ENCODE measurements at regions of chr1 and their contacts with region 1.

Region 1: GRCh38 chr1:230797942-230798418 is 50.8 kb downstream of the CAPN9 start:
- DNase-seq: peak; percentile 73
- H3K4me3 Mint-ChIP-seq: no peak overlapping the region
- H3K27ac Mint-ChIP-seq: no peak overlapping the region
- H3K4me1 Mint-ChIP-seq: no peaks in the 10 kb centered on the region
- H3K27me3 Mint-ChIP-seq: no peaks in the 10 kb centered on the region
- CTCF ChIP-seq: peak; percentile 81

Region 2: DNA sequence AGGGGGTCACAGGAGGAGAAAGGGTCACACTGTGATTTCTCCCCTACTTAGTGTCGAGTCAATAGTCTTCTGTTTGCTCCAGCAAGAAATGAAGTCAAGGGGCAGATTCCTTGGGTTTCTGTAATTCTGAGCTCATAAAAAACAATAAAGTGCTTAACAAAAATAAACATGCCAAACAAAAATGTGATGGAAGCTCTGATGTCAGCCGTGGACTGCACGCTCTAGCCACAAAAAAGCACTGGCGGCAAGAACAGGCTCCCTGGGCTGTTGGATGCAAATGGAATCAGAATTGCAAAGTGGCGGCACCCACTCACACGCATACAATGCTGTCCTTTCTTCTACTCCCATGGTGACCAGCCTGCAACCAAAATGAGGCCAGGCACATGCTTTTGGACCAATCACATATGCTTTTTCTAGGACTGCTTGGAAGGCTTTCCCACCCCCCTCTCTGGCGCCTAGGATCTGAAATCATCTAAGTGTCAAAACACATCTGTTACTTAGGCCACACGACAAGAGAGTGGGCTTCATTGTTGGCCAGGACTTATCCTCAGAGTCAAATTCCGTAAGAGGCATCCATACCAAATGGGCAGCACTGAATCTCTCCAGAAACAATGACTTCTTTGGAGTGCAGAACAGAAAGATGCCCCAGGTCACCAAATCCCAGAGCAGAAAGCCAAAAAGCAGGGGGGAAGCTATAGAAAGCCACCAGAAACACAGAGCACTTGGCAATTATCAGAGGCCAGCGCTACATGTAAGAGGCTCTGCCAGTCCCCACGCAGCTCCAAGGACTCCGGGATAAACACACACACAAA is 61.1 kb after region 1 on chr1:
- CTCF ChIA-PET with region 1: no interaction called
- intact Hi-C with region 1: loop called (anchors 2 kb)
- DNase-seq: peak; percentile 16
- H3K4me3 Mint-ChIP-seq: peak overlapping the region; percentile 44
- H3K27ac Mint-ChIP-seq: peak overlapping the region; percentile 95
- H3K4me1 Mint-ChIP-seq: peaks cover 96% of the 10 kb centered on the region
- H3K27me3 Mint-ChIP-seq: no peaks in the 10 kb centered on the region
- CTCF ChIP-seq: no peak

Region 3: GRCh38 chr1:230867903-230868735 is 70.1 kb after region 1 on chr1 and contains the start of gene C1orf198:
- CTCF ChIA-PET with region 1: interaction called, 4 read pairs
- intact Hi-C with region 1: loop called (anchors 2 kb)
- DNase-seq: peak; percentile 88
- H3K4me3 Mint-ChIP-seq: peak within 1 kb of the TSS; percentile 86
- H3K27ac Mint-ChIP-seq: peak within 1 kb of the TSS; percentile 97
- H3K4me1 Mint-ChIP-seq: peaks cover 50% of the 10 kb centered on the region
- H3K27me3 Mint-ChIP-seq: no peaks in the 10 kb centered on the region
- CTCF ChIP-seq: no peak
- total RNA-seq, gene C1orf198: 77.2 and 80.4 TPM in 2 replicates

Region 4: DNA sequence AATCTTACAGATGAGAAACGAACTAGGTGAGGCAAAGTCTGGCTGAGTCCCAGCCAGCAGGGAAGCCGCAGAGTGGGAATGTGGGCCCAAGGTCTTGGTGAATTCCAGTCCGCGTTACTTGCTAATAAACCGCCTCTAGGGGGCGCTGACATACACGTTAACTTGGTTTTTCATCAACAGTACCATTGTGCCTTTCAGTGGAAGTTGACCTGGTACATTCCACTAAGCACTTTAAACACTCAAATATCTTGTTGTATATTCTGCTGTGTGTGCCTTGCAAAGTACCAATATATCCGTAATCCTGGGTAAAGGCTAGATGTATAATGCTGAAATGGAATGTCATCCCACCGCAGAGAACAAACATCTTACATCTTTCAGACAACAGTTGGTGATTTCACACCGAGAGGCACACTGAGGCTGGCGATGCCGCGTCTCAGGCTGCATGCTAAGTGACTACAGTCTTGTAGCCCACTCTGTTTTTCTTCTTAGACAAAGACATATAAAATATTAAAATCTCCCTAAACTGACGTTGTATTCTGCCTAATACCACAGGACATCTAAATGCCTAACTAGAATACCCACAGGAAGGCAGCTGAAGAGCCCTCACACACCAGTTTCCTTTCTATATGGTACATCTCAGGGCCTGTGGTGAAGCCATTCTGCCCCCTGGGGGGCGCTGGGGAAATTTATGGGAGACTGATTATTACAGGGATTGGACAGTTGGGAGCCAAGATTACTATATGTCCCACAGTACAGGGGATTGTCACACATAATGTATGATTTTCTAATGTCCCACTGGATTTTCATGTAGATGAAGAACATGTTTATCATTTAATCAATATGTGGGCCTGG is 119.5 kb after region 1 on chr1:
- CTCF ChIA-PET with region 1: no interaction called
- intact Hi-C with region 1: loop called (anchors 1 kb)
- DNase-seq: peak; percentile 80
- H3K4me3 Mint-ChIP-seq: no peak overlapping the region
- H3K27ac Mint-ChIP-seq: no peak overlapping the region
- H3K4me1 Mint-ChIP-seq: no peaks in the 10 kb centered on the region
- H3K27me3 Mint-ChIP-seq: no peaks in the 10 kb centered on the region
- CTCF ChIP-seq: peak; percentile 61

Region 5: GRCh38 chr1:230978491-230979388 is 180.8 kb after region 1 on chr1 and contains the starts of genes ARV1 and TTC13:
- CTCF ChIA-PET with region 1: no interaction called
- intact Hi-C with region 1: loop called (anchors 5 kb)
- DNase-seq: peak; percentile 100
- H3K4me3 Mint-ChIP-seq: no peak within 1 kb of the TSS
- H3K27ac Mint-ChIP-seq: peak within 1 kb of the TSS; percentile 88
- H3K4me1 Mint-ChIP-seq: no peaks in the 10 kb centered on the region
- H3K27me3 Mint-ChIP-seq: no peaks in the 10 kb centered on the region
- CTCF ChIP-seq: peak; percentile 34
- total RNA-seq, gene ARV1: 17.1 and 19.4 TPM in 2 replicates
- total RNA-seq, gene TTC13: 29.0 and 35.6 TPM in 2 replicates

Measured in Calu3 (cell line).